ENCODE measurements at regions of chr9 and their contacts with region 1.

Region 1: GRCh38 chr9:38263532-38263931 is 129.0 kb upstream of the ALDH1B1 start:
- DNase-seq: no peak
- ATAC-seq: no peak
- H3K4me3 Mint-ChIP-seq: no peak overlapping the region
- H3K27ac Mint-ChIP-seq: no peak overlapping the region
- H3K4me1 Mint-ChIP-seq: no peaks in the 10 kb centered on the region
- H3K27me3 Mint-ChIP-seq: peaks cover 7% of the 10 kb centered on the region

Region 2: GRCh38 chr9:37984672-37985611 is 278.6 kb before region 1 on chr9:
- CTCF ChIA-PET with region 1: no interaction called
- POLR2A ChIA-PET with region 1: no interaction called
- intact Hi-C with region 1: no loop called
- DNase-seq: no peak
- ATAC-seq: peak; percentile 86
- H3K4me3 Mint-ChIP-seq: no peak overlapping the region
- H3K27ac Mint-ChIP-seq: no peak overlapping the region
- H3K4me1 Mint-ChIP-seq: no peaks in the 10 kb centered on the region
- H3K27me3 Mint-ChIP-seq: no peaks in the 10 kb centered on the region

Region 3: DNA sequence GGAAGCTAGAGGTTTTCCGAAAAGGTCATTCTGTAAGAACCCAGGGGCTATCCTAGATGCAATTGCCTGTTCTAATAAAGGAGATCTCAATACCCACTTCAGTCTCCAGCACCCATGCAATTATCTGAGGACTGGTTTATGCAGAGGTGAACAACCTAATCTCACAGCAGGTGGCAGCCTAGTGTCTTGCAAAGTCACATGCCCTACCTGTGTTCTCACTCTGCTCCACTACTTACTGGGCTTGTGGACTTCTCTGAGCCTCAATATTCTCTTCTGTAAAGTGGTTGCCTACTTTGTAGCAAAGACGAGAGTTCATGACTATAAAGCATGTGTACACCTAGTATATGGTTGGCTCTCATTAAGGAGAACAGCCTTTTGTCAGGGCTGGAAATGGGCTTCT is 108.0 kb after region 1 on chr9:
- CTCF ChIA-PET with region 1: no interaction called
- POLR2A ChIA-PET with region 1: no interaction called
- intact Hi-C with region 1: loop called in 1 of 2 experiments (anchors 5 kb)
- DNase-seq: peak; percentile 47
- ATAC-seq: peak; percentile 75
- H3K4me3 Mint-ChIP-seq: no peak overlapping the region
- H3K27ac Mint-ChIP-seq: no peak overlapping the region
- H3K4me1 Mint-ChIP-seq: no peaks in the 10 kb centered on the region
- H3K27me3 Mint-ChIP-seq: peaks cover 2% of the 10 kb centered on the region